ENCODE measurements at regions of chr17 and their contacts with region 1.

Region 1: GRCh38 chr17:42517516-42517915 is 18.5 kb upstream of the NAGLU start:
- DNase-seq: peak; percentile 86
- H3K4me3 Mint-ChIP-seq: no peak overlapping the region
- H3K27ac Mint-ChIP-seq: peak overlapping the region; percentile 98
- H3K4me1 Mint-ChIP-seq: peaks cover 46% of the 10 kb centered on the region
- H3K27me3 Mint-ChIP-seq: no peaks in the 10 kb centered on the region
- CTCF ChIP-seq: peak; percentile 91

Region 2: GRCh38 chr17:42322382-42323267 is 194.9 kb before region 1 on chr17:
- CTCF ChIA-PET with region 1: interaction called, 10 read pairs
- POLR2A ChIA-PET with region 1: interaction called, 22 read pairs
- intact Hi-C with region 1: loop called (anchors 1 kb)
- DNase-seq: peak; percentile 93
- H3K4me3 Mint-ChIP-seq: no peak overlapping the region
- H3K27ac Mint-ChIP-seq: peak overlapping the region; percentile 46
- H3K4me1 Mint-ChIP-seq: peaks cover 11% of the 10 kb centered on the region
- H3K27me3 Mint-ChIP-seq: no peaks in the 10 kb centered on the region
- CTCF ChIP-seq: peak; percentile 99

Region 3: GRCh38 chr17:42405963-42406495 is 111.5 kb before region 1 on chr17:
- CTCF ChIA-PET with region 1: interaction called, 9 read pairs
- POLR2A ChIA-PET with region 1: interaction called, 25 read pairs
- intact Hi-C with region 1: loop called (anchors 1 kb)
- DNase-seq: peak; percentile 73
- H3K4me3 Mint-ChIP-seq: no peak overlapping the region
- H3K27ac Mint-ChIP-seq: peak overlapping the region; percentile 6
- H3K4me1 Mint-ChIP-seq: peaks cover 28% of the 10 kb centered on the region
- H3K27me3 Mint-ChIP-seq: no peaks in the 10 kb centered on the region
- CTCF ChIP-seq: peak; percentile 74

Region 4: DNA sequence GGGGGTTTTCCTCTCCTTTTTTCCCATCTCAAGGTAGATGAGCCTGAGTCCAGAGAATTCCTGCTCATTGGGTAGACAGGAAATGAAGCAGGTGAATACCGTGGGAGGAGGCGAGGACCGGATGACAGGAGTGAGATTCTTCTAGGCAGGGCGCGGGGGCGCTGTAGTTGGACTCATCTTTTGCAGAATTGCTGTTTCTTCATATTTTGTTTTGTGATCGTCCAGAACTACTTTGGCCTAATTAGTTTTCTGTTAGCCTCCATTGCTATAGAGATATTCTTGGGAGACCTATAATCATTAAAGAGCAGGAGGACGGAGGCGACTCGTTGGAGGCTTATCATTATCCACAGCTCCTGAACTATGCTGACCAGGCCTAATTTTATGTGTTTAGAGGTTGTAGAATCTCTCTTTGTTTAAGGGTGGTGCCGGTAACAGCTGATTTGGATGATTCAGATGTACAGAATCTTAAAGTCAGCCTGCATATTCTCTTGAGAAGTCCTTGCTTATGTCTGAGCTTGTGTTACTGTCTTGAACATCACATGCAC is 58.2 kb before region 1 on chr17:
- CTCF ChIA-PET with region 1: interaction called, 3 read pairs
- POLR2A ChIA-PET with region 1: interaction called, 12 read pairs
- intact Hi-C with region 1: no loop called
- DNase-seq: peak; percentile 63
- H3K4me3 Mint-ChIP-seq: peak overlapping the region; percentile 92
- H3K27ac Mint-ChIP-seq: peak overlapping the region; percentile 92
- H3K4me1 Mint-ChIP-seq: peaks cover 37% of the 10 kb centered on the region
- H3K27me3 Mint-ChIP-seq: no peaks in the 10 kb centered on the region
- CTCF ChIP-seq: peak; percentile 29

Region 5: GRCh38 chr17:42536048-42536371 is 18.5 kb after region 1 on chr17 and contains the start of gene NAGLU:
- CTCF ChIA-PET with region 1: interaction called, 10 read pairs
- POLR2A ChIA-PET with region 1: interaction called, 43 read pairs
- intact Hi-C with region 1: no loop called
- DNase-seq: peak; percentile 84
- H3K4me3 Mint-ChIP-seq: peak within 1 kb of the TSS; percentile 81
- H3K27ac Mint-ChIP-seq: peak within 1 kb of the TSS; percentile 87
- H3K4me1 Mint-ChIP-seq: peaks cover 18% of the 10 kb centered on the region
- H3K27me3 Mint-ChIP-seq: no peaks in the 10 kb centered on the region
- CTCF ChIP-seq: no peak
- total RNA-seq, gene NAGLU: 21.0 and 29.5 TPM in 2 replicates

Measured in MCF 10A (cell line).